ENCODE measurements at regions of chr1 and their contacts with region 1.

Region 1: DNA sequence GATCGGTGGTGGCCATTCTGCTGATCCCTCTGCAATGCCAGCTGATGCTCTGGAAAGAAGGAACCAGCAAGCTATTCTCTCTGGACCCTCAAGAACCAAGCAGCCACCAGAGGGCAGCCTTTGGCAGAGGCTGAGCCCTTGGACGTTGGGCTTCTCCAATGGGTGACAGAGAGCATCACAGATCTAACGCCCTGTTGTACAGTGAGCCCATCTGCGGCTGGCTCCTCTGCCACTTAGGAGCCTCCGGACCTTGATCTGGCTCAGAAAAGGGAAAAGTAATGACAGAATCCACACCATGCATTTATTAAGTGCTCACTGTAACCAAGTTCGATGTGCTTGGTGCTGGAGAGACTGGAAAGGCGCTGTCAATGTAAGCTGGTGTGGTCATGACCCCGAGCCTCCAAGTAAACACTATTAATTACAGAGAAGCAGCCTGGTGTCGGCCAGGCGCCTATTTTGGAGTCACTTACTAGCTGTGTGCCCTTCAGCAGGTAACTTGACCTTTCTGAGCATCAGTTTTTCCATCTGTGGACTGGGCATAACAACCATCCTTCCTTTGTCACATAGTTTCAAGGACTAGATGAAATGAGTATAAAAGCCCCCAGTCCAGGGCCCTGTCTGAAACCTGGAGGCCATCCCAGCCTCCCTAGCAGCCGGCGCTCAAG is 34.9 kb downstream of the ECE1 start:
- DNase-seq: peak; percentile 68 to 91 (median 80)
- ATAC-seq: peak; percentile 77 to 95
- H3K4me3 Mint-ChIP-seq: no peak overlapping the region
- H3K27ac Mint-ChIP-seq: peak overlapping the region in 8 of 10 donors; percentile 58 to 89 (median 82)
- H3K4me1 Mint-ChIP-seq: peaks cover 18 to 37% (median 29%) of the 10 kb centered on the region in 4 donors
- H3K27me3 Mint-ChIP-seq: no peaks in the 10 kb centered on the region

Region 2: GRCh38 chr1:21368515-21369289 is 113.3 kb after region 1 on chr1:
- POLR2A ChIA-PET with region 1: interaction called, 20 read pairs
- DNase-seq: peak; percentile 41 to 81 (median 58)
- ATAC-seq: peak; percentile 57 to 74
- H3K4me3 Mint-ChIP-seq: no peak overlapping the region
- H3K27ac Mint-ChIP-seq: peak overlapping the region in 4 of 10 donors; percentile 19 to 92 (median 42)
- H3K4me1 Mint-ChIP-seq: peaks cover 10 to 15% (median 13%) of the 10 kb centered on the region in 4 donors
- H3K27me3 Mint-ChIP-seq: peaks cover 0 to 2% (median 0%) of the 10 kb centered on the region in 5 donors